Activated B cell treated with CpG ODN at 0.5 μM for 24 hours (primary cell): ENCODE measurements at regions of chr10 and their contacts with region 1.

Region 1: GRCh38 chr10:22251751-22252223 is 34.0 kb upstream of the EBLN1 start:
- DNase-seq: peak; percentile 61
- ATAC-seq: peak; percentile 45
- H3K4me3 Mint-ChIP-seq: peak overlapping the region; percentile 97
- H3K27ac Mint-ChIP-seq: peak overlapping the region; percentile 100
- H3K4me1 Mint-ChIP-seq: peaks cover 27% of the 10 kb centered on the region
- H3K27me3 Mint-ChIP-seq: no peaks in the 10 kb centered on the region
- CTCF ChIP-seq: no peak

Region 2: DNA sequence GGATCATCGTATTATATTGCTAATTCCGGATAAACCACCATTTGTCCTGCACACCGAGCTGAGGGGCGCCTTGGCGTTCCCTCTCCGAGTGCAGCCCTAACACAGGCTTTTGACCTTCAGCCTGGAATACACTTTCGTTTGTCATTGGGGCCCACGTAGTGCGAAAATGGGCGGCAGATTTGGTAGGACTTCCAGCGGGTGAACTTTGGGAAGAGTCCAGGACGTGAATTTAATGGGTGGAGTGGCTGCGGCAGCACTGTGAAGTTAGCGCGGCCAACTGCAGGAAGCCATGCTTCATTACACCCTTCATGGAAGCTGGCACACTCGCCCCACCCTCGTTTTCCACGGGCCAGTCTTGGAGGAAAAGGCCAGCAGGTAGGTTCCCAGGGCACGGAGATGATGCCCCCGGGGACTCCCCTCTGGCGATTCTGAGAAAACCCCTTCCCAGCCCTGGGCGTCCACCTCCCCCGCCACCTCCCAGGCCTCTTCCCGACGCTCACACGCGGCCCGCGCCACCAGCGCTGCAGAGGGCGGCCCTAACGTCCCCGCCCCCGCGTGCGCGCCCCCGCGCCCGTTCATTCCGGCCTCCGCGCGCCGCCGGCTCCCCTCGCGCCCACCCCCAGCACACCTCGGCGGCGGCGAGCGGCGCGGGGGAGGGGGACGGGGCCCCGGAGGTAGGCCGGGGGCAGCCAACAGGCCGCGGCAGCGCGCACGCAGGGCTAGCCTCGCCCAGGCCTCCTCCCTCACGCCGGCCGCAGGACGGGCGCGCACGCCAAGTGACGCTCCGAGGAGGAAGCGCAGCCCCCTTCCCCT is 718.1 kb before region 1 on chr10 and contains the start of gene MLLT10:
- CTCF ChIA-PET with region 1: no interaction called
- POLR2A ChIA-PET with region 1: interaction called, 4 read pairs
- intact Hi-C with region 1: loop called (anchors 1 kb)
- DNase-seq: peak; percentile 94
- ATAC-seq: peak; percentile 88
- H3K4me3 Mint-ChIP-seq: peak within 1 kb of the TSS; percentile 90
- H3K27ac Mint-ChIP-seq: peak within 1 kb of the TSS; percentile 92
- H3K4me1 Mint-ChIP-seq: peaks cover 18% of the 10 kb centered on the region
- H3K27me3 Mint-ChIP-seq: peaks cover 2% of the 10 kb centered on the region
- CTCF ChIP-seq: no peak
- total RNA-seq, gene MLLT10: 40.6 and 48.7 TPM in 2 replicates

Region 3: DNA sequence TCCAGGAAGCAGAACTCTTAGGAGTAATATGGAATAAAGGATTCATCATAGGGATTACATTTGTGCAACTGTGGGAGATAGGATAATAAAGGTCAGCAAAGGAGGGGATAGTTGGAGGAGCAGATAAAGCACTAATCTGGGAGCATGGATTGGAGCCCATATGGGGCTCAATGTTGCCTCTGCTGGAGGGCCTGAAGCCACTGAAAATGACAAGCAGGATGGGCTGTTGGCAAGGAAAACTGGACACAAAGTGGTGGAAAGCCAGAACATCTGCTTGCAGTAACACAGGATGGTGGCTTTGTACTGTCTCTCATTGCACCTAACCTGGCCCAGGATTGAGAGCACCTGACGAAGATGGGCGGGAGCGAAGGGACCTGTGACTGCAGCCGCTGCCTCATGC is 49.4 kb after region 1 on chr10:
- CTCF ChIA-PET with region 1: no interaction called
- POLR2A ChIA-PET with region 1: no interaction called
- intact Hi-C with region 1: no loop called
- DNase-seq: no peak
- ATAC-seq: no peak
- H3K4me3 Mint-ChIP-seq: no peak overlapping the region
- H3K27ac Mint-ChIP-seq: no peak overlapping the region
- H3K4me1 Mint-ChIP-seq: no peaks in the 10 kb centered on the region
- H3K27me3 Mint-ChIP-seq: peaks cover 11% of the 10 kb centered on the region
- CTCF ChIP-seq: no peak

Region 4: DNA sequence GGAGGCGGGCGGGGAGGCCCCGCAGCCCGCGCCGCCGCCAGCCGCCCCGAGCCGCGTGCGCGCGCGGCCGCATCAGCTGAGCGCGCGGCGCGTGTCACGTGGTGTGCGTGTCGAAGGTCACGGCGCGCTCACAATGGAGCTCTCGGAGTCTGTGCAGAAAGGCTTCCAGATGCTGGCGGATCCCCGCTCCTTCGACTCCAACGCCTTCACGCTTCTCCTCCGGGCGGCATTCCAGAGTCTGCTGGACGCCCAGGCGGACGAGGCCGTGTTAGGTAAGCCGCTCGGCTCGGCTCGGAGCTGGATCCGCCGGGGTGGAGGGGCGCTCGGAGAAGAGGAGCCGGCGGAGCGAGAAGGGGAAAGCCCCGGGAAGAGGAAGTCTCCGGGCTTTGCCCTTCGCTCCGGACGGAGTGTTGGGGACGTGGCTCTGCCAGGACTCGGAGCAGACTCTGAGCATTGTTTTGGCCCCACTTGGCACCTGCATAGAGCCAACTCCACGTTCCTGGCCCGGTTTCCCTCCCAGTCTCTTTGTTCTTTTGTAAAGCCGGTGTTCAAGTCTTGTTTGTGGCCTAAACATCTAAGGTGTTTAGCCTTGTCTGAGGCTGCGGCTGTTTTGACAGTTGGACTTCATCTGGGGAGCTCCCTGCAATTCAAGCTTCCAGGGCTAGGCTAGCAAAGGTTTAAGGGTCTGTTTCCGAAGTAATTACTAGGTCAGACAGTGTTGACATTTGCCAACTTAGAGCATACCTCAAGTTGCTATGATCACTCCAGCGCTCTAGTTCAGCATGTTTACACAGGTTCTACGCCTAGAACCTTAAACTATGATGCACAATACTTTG is 64.7 kb after region 1 on chr10 and contains the start of gene COMMD3:
- CTCF ChIA-PET with region 1: interaction called, 6 read pairs
- POLR2A ChIA-PET with region 1: interaction called, 83 read pairs
- intact Hi-C with region 1: loop called (anchors 1 kb)
- DNase-seq: peak; percentile 86
- ATAC-seq: peak; percentile 65
- H3K4me3 Mint-ChIP-seq: peak within 1 kb of the TSS; percentile 97
- H3K27ac Mint-ChIP-seq: peak within 1 kb of the TSS; percentile 98
- H3K4me1 Mint-ChIP-seq: peaks cover 40% of the 10 kb centered on the region
- H3K27me3 Mint-ChIP-seq: no peaks in the 10 kb centered on the region
- CTCF ChIP-seq: no peak
- total RNA-seq, gene COMMD3: 68.2 and 72.8 TPM in 2 replicates

Region 5: DNA sequence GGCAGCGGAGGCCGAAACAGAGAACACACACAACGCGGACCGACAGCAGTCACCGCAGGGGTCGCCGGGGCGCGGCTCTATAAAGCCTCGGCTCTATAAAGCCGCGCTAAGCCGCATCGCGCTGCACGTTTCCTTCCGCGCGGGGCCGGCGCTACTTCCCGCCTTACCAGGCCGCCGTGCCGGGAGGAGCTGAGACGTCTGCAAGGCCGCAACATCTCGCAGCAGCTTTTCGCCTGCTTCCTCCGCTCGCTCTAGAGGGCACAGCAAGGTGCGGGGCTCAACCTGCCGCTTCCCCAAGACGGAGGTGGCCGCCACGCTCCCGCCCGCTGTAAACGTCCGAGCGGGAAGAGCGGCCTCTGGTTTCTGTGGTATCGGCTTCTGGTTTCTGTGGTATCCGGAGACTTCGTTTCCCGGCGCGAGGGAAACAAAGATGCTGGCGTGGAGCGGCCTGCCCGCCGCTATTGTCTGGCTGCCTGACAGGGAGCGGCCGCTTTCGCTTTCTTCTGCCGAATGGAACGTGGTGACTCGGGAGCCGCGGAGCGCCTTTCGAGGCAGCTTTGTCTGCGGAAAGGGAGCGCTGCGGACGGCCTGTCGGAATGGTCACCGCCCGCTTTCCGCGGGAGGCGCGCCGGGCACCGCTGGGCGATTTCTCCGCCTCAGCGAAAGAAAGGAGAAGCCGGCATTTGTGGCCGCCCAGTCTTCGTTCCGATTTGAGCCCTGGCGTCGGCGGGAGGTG is 185.3 kb after region 1 on chr10:
- CTCF ChIA-PET with region 1: no interaction called
- POLR2A ChIA-PET with region 1: interaction called, 42 read pairs
- intact Hi-C with region 1: loop called (anchors 1 kb)
- DNase-seq: peak; percentile 88
- ATAC-seq: peak; percentile 88
- H3K4me3 Mint-ChIP-seq: peak overlapping the region; percentile 94
- H3K27ac Mint-ChIP-seq: peak overlapping the region; percentile 96
- H3K4me1 Mint-ChIP-seq: peaks cover 36% of the 10 kb centered on the region
- H3K27me3 Mint-ChIP-seq: no peaks in the 10 kb centered on the region
- CTCF ChIP-seq: no peak

Region 6: GRCh38 chr10:22606164-22606614 is 354.4 kb after region 1 on chr10:
- CTCF ChIA-PET with region 1: no interaction called
- POLR2A ChIA-PET with region 1: interaction called, 3 read pairs
- intact Hi-C with region 1: loop called (anchors 5 kb)
- DNase-seq: no peak
- ATAC-seq: peak; percentile 75
- H3K4me3 Mint-ChIP-seq: peak overlapping the region; percentile 68
- H3K27ac Mint-ChIP-seq: peak overlapping the region; percentile 94
- H3K4me1 Mint-ChIP-seq: peaks cover 93% of the 10 kb centered on the region
- H3K27me3 Mint-ChIP-seq: no peaks in the 10 kb centered on the region
- CTCF ChIP-seq: no peak

Region 7: DNA sequence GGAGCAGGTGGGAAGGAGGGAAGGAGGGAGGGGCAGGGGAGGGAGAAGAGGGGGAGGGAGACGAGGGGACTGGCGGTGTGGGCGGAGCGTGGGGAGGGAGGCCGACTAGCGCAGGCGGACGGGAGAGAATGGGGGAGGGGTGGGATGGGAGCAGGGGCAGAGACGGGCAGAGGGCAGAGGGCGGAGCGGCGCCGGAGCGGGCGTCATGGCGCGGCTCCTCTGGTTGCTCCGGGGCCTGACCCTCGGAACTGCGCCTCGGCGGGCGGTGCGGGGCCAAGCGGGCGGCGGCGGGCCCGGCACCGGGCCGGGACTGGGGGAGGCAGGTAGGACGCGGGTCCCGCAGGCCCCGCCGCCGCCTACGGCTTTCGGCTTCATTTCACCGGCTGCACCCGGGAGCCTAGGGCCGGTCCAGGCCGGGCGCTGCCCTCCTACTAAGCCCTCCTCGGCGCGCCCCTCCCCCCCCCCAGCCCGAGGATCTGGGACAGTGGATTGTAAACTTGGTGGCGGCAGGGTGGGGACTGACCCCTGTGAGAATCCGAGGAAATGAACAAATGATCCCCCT is 843.7 kb after region 1 on chr10 and contains the start of gene MSRB2:
- CTCF ChIA-PET with region 1: no interaction called
- POLR2A ChIA-PET with region 1: no interaction called
- intact Hi-C with region 1: loop called (anchors 10 kb)
- DNase-seq: peak; percentile 47
- ATAC-seq: peak; percentile 81
- H3K4me3 Mint-ChIP-seq: peak within 1 kb of the TSS; percentile 89
- H3K27ac Mint-ChIP-seq: peak within 1 kb of the TSS; percentile 77
- H3K4me1 Mint-ChIP-seq: peaks cover 17% of the 10 kb centered on the region
- H3K27me3 Mint-ChIP-seq: no peaks in the 10 kb centered on the region
- CTCF ChIP-seq: no peak
- total RNA-seq, gene MSRB2: 4.1 and 4.6 TPM in 2 replicates